ENCODE measurements at regions of chr6 and their contacts with region 1.

Region 1: DNA sequence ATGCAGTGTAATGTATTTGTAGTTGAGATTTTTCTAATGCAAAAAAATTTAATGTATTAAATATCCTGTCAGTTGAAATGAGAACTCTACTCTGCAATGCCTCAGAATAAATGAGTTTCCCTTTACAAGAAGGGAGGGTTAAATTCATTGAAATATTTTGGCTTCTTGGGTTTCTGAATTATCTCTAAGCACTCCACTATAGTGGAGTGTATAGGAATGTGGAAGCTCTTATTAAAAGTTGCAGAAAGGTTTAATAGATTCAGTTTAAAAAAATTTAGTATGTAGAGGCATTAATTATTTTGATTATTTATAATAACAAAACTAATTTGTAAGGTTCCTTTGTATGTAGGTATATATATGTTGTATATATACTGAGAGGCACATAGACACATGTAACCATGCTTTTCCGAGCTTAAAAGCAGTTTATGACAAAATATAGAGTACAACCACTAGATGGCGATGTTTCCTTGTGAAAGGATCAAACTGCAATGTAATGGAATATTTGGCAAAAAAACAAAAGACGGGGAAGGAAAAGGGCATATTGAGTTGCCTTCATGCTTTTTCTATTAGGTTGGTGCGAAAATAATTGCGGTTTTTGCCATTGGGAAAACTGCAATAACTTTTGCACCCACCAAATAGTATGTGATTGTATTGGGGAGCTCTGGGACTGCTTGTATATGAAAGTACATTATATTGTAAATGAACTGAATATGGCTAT is 144.2 kb downstream of the MYO6 start:
- DNase-seq: peak; percentile 23
- CTCF ChIP-seq: peak; percentile 64

Region 2: DNA sequence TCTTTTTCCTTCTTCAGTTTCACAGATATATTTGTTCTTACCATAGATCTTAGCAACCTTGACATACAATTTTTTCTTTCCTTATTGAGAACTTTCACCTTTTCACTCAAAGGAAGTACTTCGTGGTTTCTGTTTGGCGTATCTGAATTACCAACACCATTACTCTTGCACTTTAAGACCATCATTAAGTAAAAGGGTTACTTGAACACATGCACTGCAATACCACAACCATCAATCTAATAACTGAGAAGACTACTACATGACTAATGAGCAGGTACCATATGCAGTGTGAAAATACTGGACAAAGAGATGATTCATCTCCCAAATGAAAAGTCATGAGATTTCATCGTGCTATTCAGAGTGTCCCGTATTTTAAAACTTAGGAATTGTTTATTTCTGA is 313.3 kb before region 1 on chr6:
- CTCF ChIA-PET with region 1: no interaction called
- POLR2A ChIA-PET with region 1: no interaction called
- DNase-seq: peak; percentile 19
- CTCF ChIP-seq: no peak

Region 3: GRCh38 chr6:75855052-75855451 is 38.2 kb before region 1 on chr6:
- CTCF ChIA-PET with region 1: interaction called, 15 read pairs
- POLR2A ChIA-PET with region 1: no interaction called
- DNase-seq: peak; percentile 20
- CTCF ChIP-seq: peak; percentile 55

Region 4: GRCh38 chr6:75882734-75883133 is 10.5 kb before region 1 on chr6:
- CTCF ChIA-PET with region 1: interaction called, 193 read pairs
- POLR2A ChIA-PET with region 1: no interaction called
- DNase-seq: no peak
- CTCF ChIP-seq: no peak

Region 5: GRCh38 chr6:75913040-75913439 is 19.8 kb after region 1 on chr6:
- CTCF ChIA-PET with region 1: interaction called, 56 read pairs
- POLR2A ChIA-PET with region 1: no interaction called
- DNase-seq: no peak
- CTCF ChIP-seq: no peak

Region 6: GRCh38 chr6:75934643-75935472 is 41.6 kb after region 1 on chr6:
- CTCF ChIA-PET with region 1: interaction called, 36 read pairs
- POLR2A ChIA-PET with region 1: no interaction called
- DNase-seq: peak; percentile 77
- CTCF ChIP-seq: peak; percentile 74

Region 7: GRCh38 chr6:76072562-76072961 is 179.3 kb after region 1 on chr6 and contains the start of gene IMPG1:
- CTCF ChIA-PET with region 1: no interaction called
- POLR2A ChIA-PET with region 1: no interaction called
- DNase-seq: no peak
- CTCF ChIP-seq: no peak

Region 8: GRCh38 chr6:77457720-77458349 is 1564.6 kb after region 1 on chr6:
- CTCF ChIA-PET with region 1: interaction called, 12 read pairs
- POLR2A ChIA-PET with region 1: no interaction called
- DNase-seq: peak; percentile 44
- CTCF ChIP-seq: peak; percentile 74